ENCODE measurements at regions of chr10 and their contacts with region 1.

Region 1: DNA sequence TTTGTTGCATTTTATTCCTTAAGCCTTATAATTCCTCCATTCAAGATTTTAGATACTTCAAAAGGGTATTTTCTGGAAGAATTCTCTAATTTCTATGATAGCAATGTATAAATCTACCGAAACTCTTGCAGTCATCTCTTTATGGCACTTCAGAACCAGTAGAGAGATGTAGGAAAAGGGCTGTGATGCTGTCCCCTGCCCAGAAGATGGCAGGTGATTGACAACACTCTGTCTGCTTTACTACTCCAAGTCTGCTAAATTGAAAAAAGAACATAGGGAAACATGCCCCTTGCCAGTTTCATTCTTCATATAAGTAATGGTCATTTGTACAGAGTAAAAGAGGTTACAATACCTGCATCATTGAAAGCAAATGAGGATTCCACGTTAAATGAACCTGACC is 5.1 kb downstream of the TCTN3 start:
- DNase-seq: no peak
- H3K4me3 Mint-ChIP-seq: no peak overlapping the region
- H3K27ac Mint-ChIP-seq: no peak overlapping the region
- H3K4me1 Mint-ChIP-seq: peaks cover 23% of the 10 kb centered on the region
- H3K27me3 Mint-ChIP-seq: no peaks in the 10 kb centered on the region
- CTCF ChIP-seq: no peak

Region 2: DNA sequence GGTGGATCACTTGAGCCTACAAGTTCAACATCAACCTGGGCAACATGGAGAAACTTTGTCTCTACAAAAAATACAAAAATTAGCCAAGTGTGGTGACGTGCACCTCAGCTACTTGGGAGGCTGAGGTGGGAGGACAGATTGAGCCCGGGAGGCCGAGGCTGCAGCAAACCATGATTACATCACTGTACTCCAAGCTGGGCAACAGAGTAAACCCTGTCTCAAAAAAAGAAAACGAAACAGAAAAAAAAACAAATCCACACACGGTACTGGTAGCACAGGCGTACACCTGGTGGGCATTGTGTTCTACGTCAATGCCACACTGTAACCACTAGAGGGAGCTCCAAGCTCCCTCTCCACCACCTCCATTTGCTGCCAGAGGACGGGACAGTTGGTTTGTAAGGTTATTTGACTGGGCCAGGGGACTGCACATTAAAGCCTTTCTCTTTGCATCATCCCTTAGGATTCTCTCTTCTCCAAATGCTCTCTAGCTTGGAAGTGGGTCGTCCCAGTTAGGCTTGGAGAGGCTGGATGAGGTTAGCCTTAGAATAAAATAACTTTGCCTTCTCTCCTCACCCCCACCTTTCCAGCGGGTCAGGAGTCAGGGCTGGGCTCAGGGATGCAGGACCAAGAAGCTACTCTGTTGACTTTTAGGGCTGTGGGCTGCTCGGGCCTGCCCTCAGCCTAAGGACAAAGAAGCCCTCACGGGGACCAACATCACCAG is 258.3 kb before region 1 on chr10:
- CTCF ChIA-PET with region 1: no interaction called
- POLR2A ChIA-PET with region 1: no interaction called
- intact Hi-C with region 1: no loop called
- DNase-seq: peak; percentile 73
- H3K4me3 Mint-ChIP-seq: no peak overlapping the region
- H3K27ac Mint-ChIP-seq: no peak overlapping the region
- H3K4me1 Mint-ChIP-seq: peaks cover 11% of the 10 kb centered on the region
- H3K27me3 Mint-ChIP-seq: peaks cover 7% of the 10 kb centered on the region
- CTCF ChIP-seq: peak; percentile 89

Region 3: GRCh38 chr10:95640891-95641315 is 47.7 kb before region 1 on chr10:
- CTCF ChIA-PET with region 1: no interaction called
- POLR2A ChIA-PET with region 1: no interaction called
- intact Hi-C with region 1: no loop called
- DNase-seq: no peak
- H3K4me3 Mint-ChIP-seq: no peak overlapping the region
- H3K27ac Mint-ChIP-seq: no peak overlapping the region
- H3K4me1 Mint-ChIP-seq: no peaks in the 10 kb centered on the region
- H3K27me3 Mint-ChIP-seq: no peaks in the 10 kb centered on the region
- CTCF ChIP-seq: no peak

Region 4: DNA sequence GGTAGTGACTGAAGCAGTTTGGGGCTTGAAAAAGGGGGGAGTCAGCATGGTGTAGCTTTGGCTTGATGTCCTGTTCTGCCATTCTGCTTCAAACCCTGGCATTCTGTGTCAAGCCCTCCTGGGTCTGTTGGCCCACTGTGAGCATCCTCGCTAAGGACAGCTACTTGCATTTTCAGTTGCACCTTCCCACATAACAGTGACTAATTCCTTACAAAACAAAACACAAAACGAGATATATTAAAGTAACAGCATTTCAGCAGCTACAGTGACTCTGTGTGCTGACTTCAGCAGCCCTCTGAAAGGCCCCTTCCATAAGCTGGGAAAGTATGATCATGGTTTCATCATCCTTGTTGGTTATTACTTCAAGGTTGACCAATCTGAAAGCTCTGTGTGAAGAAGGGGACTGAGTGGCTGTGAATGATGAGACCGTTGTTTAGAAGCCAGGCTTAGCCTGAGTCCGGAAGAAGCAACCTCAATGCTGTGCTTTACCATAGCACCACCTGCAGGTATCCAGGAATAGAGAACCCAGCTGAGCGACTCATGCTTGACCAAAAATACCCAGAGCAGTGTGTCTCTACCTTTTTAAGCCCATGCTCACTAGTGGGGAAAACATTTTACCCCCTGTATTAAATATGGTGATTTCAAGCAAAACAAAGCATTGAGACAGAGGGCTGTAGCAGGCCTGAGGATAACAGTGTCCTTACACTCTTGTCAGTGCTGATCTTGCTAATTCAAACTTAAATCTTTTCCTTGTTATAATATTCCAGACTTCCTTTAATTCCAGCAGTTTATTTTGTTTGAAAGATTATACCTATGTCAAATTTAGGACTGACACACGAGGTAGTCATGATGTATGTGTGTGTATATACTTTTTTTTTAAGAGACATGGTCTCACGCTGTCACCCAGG is 176.5 kb after region 1 on chr10:
- CTCF ChIA-PET with region 1: interaction called, 61 read pairs
- POLR2A ChIA-PET with region 1: interaction called, 20 read pairs
- intact Hi-C with region 1: no loop called
- DNase-seq: peak; percentile 76
- H3K4me3 Mint-ChIP-seq: no peak overlapping the region
- H3K27ac Mint-ChIP-seq: no peak overlapping the region
- H3K4me1 Mint-ChIP-seq: peaks cover 4% of the 10 kb centered on the region
- H3K27me3 Mint-ChIP-seq: no peaks in the 10 kb centered on the region
- CTCF ChIP-seq: peak; percentile 29

Measured in MCF 10A (cell line).